ENCODE measurements at regions of chr16 and their contacts with region 1.

Region 1: DNA sequence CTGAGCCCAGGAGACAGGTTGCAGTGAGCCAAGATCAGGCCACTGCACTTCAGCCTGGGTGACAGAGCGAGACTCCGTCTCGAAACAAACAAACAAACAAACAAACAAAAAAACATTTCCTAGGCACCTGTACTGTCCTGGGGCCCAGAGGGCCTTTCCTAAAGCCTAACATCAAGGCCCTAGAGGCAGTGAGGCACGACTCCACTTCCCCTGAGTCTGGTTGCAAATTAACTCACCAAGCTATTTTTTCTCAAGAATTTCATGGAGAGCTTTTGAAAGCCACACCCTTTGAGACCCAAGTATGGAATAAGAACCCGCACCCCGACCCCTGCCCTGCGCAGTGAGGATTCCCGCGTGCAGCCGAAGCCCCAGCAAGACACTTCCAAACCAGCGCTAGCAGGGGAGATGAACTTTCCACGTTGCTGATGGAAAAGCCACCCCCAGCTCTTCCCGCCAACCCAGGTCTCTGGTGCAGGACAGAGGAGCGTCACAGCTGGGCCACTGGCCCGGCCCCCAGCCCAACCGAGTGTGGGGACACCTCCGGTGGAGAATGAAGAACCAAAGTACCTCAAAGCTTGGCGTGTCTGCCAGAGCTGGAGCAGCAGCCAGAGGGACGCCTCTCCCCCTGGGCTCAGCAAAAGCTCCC is 1.2 kb downstream of the CHST5 start:
- DNase-seq: no peak
- H3K4me3 ChIP-seq: no peak overlapping the region
- H3K27ac ChIP-seq: no peak overlapping the region
- H3K4me1 ChIP-seq: no peaks in the 10 kb centered on the region
- H3K27me3 ChIP-seq: no peaks in the 10 kb centered on the region
- CTCF ChIP-seq: no peak
- EP300 ChIP-seq: no peak
- RAD21 ChIP-seq: no peak

Region 2: DNA sequence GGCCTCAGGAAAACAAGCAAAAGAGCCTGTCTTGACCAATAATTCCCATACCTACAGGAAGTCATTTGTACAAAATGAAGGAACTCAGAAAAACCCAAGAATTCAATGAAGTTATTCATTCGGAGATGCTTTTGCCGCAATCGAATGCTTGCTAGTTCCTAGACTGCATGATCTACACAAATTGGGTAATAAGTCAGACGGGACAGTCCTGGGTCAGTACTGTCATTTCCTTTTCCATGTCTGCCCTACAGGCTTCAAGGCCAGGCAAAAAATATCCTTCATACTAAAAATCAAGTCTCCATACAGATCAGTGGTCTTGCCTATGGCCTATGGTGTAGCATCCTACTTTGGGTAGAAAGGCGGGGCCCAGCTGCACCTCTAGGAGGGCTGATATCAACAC is 172.7 kb before region 1 on chr16:
- CTCF ChIA-PET with region 1: no interaction called
- POLR2A ChIA-PET with region 1: no interaction called
- DNase-seq: no peak
- H3K4me3 ChIP-seq: no peak overlapping the region
- H3K27ac ChIP-seq: no peak overlapping the region
- H3K4me1 ChIP-seq: no peaks in the 10 kb centered on the region
- H3K27me3 ChIP-seq: no peaks in the 10 kb centered on the region
- CTCF ChIP-seq: no peak
- EP300 ChIP-seq: no peak
- RAD21 ChIP-seq: no peak

Region 3: GRCh38 chr16:75420987-75421819 is 113.5 kb before region 1 on chr16:
- CTCF ChIA-PET with region 1: no interaction called
- POLR2A ChIA-PET with region 1: no interaction called
- DNase-seq: peak; percentile 71
- H3K4me3 ChIP-seq: peak overlapping the region in 1 of 2 experiments; percentile 31; a peak in 1 of 4 replicates
- H3K27ac ChIP-seq: peak overlapping the region; percentile 47 to 86
- H3K4me1 ChIP-seq: peaks cover 9 to 19% of the 10 kb centered on the region in 2 experiments; a peak in 3 of 4 replicates
- H3K27me3 ChIP-seq: no peaks in the 10 kb centered on the region
- CTCF ChIP-seq: no peak
- EP300 ChIP-seq: no peak
- RAD21 ChIP-seq: no peak

Region 4: DNA sequence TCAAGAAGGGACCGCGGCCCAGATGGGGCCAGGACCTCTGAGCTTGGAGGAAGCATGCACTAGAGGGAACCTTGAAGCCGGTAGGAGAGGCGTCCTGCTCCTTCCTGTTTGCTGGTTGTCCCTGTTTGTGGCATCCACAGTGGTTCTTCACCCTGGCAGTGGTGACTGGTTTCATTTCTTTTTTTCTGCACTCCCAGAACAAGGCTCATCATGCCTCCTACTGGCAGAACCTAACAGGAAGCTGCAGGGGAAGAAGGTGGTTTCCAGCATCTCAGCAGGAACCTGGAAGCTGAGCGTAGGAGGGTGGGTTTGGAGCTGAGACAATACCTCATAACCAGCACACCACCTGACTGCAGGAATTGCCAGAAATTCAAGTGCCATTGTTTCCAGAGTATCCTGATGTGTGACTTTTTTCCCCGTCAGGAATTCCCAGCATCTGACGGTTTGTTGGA is 15.6 kb after region 1 on chr16:
- CTCF ChIA-PET with region 1: interaction called, 17 read pairs
- POLR2A ChIA-PET with region 1: no interaction called
- DNase-seq: no peak
- H3K4me3 ChIP-seq: no peak overlapping the region
- H3K27ac ChIP-seq: no peak overlapping the region
- H3K4me1 ChIP-seq: no peaks in the 10 kb centered on the region; a peak in 1 of 4 replicates
- H3K27me3 ChIP-seq: no peaks in the 10 kb centered on the region
- CTCF ChIP-seq: peak; percentile 45; the same call in 1 of the 2 replicates
- EP300 ChIP-seq: no peak
- RAD21 ChIP-seq: peak; percentile 51

Measured in SK-N-SH (cell line).